Endothelial cell of umbilical vein (primary cell): ENCODE measurements at regions of chr10 and their contacts with region 1.

Region 1: DNA sequence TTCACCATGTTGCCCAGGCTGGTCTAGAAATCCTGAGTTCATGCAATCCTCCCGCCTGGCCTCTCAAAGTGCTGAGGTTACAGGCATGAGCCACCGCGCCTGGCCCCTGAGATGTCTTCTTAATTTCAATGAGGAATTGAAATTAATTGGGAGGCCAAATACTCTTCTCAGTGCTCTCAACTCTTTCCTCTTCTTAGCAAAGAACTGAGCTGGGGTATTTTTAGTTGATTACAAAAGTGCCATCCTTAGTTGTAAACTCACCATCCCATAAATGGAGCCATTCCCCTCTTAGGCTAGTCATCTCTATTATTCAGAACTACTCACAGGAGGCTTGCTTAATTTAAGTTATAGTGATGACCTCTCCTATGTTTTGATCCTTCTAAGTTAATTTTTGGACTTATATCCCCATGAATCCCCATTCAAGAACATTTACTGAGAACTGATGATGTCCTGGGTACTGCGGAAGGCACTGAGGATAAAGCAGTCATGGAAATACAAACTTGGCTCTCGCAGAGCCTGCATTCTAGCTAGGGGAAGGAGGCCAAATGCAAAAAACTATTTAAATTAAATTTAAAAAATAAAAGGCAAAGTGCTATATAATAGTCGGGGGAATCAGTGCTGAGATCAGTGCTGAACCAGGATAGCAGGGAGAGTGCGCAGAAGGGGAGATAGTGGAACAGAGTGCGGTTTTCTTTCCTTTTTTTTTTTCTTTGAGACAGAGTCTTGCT is 145.3 kb downstream of the SFMBT2 start:
- DNase-seq: no peak
- H3K4me3 ChIP-seq: no peak overlapping the region
- H3K27ac ChIP-seq: no peak overlapping the region
- H3K4me1 ChIP-seq: peaks cover 10% of the 10 kb centered on the region
- H3K27me3 ChIP-seq: no peaks in the 10 kb centered on the region
- CTCF ChIP-seq: no peak
- POLR2A ChIP-seq: no peak

Region 2: GRCh38 chr10:7189909-7190308 is 75.7 kb before region 1 on chr10:
- CTCF ChIA-PET with region 1: no interaction called
- POLR2A ChIA-PET with region 1: no interaction called
- dilution Hi-C with region 1: no loop called
- intact Hi-C with region 1: loop called (anchors 2 kb)
- DNase-seq: no peak
- H3K4me3 ChIP-seq: no peak overlapping the region
- H3K27ac ChIP-seq: no peak overlapping the region
- H3K4me1 ChIP-seq: no peaks in the 10 kb centered on the region
- H3K27me3 ChIP-seq: no peaks in the 10 kb centered on the region
- CTCF ChIP-seq: no peak
- POLR2A ChIP-seq: no peak